PC-9 (cell line): ENCODE measurements at regions of chr1 and their contacts with region 1.

Region 1: GRCh38 chr1:72284348-72285073 is 2.2 kb upstream of the NEGR1 start:
- DNase-seq: peak; percentile 9 to 89
- H3K4me3 ChIP-seq: peak overlapping the region; percentile 93
- H3K27ac ChIP-seq: peak overlapping the region; percentile 68
- H3K4me1 ChIP-seq: peaks cover 13% of the 10 kb centered on the region
- H3K27me3 ChIP-seq: no peaks in the 10 kb centered on the region
- CTCF ChIP-seq: no peak; the same call in 1 of the 2 replicates

Region 2: GRCh38 chr1:72186733-72187307 is 97.7 kb before region 1 on chr1:
- CTCF ChIA-PET with region 1: no interaction called
- POLR2A ChIA-PET with region 1: interaction called, 12 read pairs
- intact Hi-C with region 1: no loop called
- DNase-seq: no peak
- H3K4me3 ChIP-seq: no peak overlapping the region
- H3K27ac ChIP-seq: no peak overlapping the region
- H3K4me1 ChIP-seq: no peaks in the 10 kb centered on the region
- H3K27me3 ChIP-seq: no peaks in the 10 kb centered on the region
- CTCF ChIP-seq: peak; percentile 59